ENCODE measurements at regions of chr17 and their contacts with region 1.

Region 1: GRCh38 chr17:80263253-80264204 is 2.9 kb downstream of the RNF213 start:
- DNase-seq: peak; percentile 78 to 88
- ATAC-seq: peak; percentile 54 to 72 (median 62)
- H3K4me3 ChIP-seq: peak overlapping the region; percentile 96
- H3K27ac ChIP-seq: peak overlapping the region; percentile 95
- H3K4me1 ChIP-seq: peaks cover 29% of the 10 kb centered on the region
- H3K27me3 ChIP-seq: no peaks in the 10 kb centered on the region
- CTCF ChIP-seq: peak; percentile 7

Region 2: DNA sequence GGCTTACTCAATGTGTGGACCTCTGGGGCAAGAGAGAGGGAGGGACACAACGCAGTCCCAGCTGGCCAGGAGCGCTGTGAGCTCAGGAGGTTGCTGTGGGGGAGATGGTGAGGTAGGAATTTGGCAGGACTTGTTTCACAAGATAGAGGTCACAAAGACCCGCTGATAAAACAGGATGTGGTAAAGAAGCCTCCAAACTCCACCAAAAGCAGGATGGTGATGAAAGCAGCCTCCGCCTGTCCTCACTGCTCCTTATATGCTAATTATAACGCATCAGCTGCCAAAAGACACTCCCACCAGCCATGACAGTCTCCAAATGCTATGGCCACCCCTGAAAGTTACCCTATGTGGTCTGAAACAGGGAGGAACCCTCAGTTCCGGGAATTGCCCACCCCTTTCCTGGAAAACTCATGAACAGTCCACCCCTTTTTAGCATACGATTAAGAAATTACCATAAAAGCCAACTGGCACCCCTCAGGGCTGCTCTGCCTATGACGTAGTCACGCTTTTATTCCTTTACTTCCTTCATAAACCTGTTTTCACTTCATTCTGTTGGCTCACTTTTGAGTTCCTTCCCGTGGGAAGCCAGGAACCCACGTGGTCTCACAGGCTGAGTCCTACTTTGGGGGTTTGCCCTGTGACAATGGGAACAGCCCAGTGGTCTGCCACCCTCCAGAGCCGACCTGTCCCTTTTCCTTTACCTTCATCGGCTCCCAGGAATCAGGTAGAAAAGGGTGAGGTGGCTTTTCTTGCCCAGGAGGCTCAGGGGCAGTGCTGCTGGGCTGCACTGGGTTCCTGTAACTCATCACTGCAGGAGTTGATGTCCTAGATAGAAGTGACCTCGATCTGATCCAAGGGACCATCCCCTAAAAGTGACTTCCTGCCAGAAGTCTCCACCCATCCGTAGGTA is 111.2 kb before region 1 on chr17:
- intact Hi-C with region 1: loop called in 1 of 2 experiments (anchors 5 kb)
- DNase-seq: no peak
- ATAC-seq: no peak
- H3K4me3 ChIP-seq: no peak overlapping the region
- H3K27ac ChIP-seq: no peak overlapping the region
- H3K4me1 ChIP-seq: peaks cover 6% of the 10 kb centered on the region
- H3K27me3 ChIP-seq: no peaks in the 10 kb centered on the region
- CTCF ChIP-seq: no peak

Region 3: DNA sequence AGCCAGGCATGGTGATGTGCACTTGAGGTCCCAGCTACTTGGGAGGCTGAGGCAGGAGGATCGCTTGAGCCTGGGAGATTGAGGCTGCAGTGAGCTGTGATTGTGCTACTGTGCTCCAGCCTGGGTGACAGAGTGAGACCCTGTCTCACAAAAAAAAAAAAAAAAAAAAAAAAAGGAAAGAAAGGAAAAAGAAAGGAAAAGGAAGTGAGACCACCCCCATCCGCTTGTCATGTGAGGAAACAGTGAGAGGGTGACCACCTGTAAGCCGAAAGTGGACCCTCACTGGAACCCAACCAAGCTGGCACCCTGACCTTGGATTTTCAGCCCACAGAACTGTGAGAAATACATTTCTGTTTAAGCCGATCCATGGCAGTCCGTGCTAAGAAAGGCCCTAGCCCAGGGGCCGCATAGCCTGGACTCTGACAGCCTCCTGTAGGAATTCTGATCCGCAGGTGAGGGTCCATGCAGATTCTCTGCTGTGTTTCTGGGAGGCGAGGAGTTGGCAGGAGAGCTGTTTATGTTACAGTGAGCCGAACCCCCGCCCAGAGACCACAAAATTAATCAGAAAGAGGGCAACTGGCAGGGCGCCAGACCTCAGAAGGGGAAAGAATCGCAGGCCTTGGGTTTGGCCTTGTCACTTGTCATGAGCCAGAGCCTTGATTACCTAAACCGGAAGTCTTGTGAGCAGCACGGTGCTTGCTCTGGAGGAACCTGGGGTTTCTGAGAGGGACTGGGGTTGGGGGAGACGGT is 44.3 kb before region 1 on chr17:
- intact Hi-C with region 1: loop called in 1 of 2 experiments (anchors 5 kb)
- DNase-seq: peak; percentile 78 to 80
- ATAC-seq: peak; percentile 21 to 51 (median 42)
- H3K4me3 ChIP-seq: peak overlapping the region; percentile 96
- H3K27ac ChIP-seq: peak overlapping the region; percentile 89
- H3K4me1 ChIP-seq: peaks cover 6% of the 10 kb centered on the region
- H3K27me3 ChIP-seq: no peaks in the 10 kb centered on the region
- CTCF ChIP-seq: no peak

Region 4: GRCh38 chr17:80327518-80327917 is 64.0 kb after region 1 on chr17:
- intact Hi-C with region 1: no loop called
- DNase-seq: peak in 1 of 2 donors; percentile 28
- ATAC-seq: no peak
- H3K4me3 ChIP-seq: no peak overlapping the region
- H3K27ac ChIP-seq: no peak overlapping the region
- H3K4me1 ChIP-seq: no peaks in the 10 kb centered on the region
- H3K27me3 ChIP-seq: no peaks in the 10 kb centered on the region
- CTCF ChIP-seq: no peak

Measured in psoas muscle (tissue), 8 donors.